HepG2 (cell line): ENCODE measurements at regions of chr3 and their contacts with region 1.

Region 1: GRCh38 chr3:14921078-14921616 is 26.2 kb upstream of the NR2C2 start:
- DNase-seq: peak; percentile 68
- ATAC-seq: peak; percentile 90
- H3K4me3 ChIP-seq: no peak overlapping the region; a peak in 1 of 6 replicates
- H3K27ac ChIP-seq: no peak overlapping the region
- H3K4me1 ChIP-seq: peaks cover 6% of the 10 kb centered on the region; the same call in 1 of the 2 replicates
- H3K27me3 ChIP-seq: peaks cover 0 to 42% of the 10 kb centered on the region in 2 experiments; a peak in 2 of 5 replicates
- CTCF ChIP-seq: peak; percentile 99
- EP300 ChIP-seq: no peak
- POLR2A ChIP-seq: no peak
- RAD21 ChIP-seq: peak; percentile 96

Region 2: GRCh38 chr3:14672588-14672987 is 248.6 kb before region 1 on chr3:
- CTCF ChIA-PET with region 1: interaction called, 24 read pairs
- POLR2A ChIA-PET with region 1: no interaction called
- in situ Hi-C with region 1: loop called (anchors 5 kb)
- intact Hi-C with region 1: loop called (anchors 1 kb)
- DNase-seq: no peak
- ATAC-seq: no peak
- H3K4me3 ChIP-seq: no peak overlapping the region
- H3K27ac ChIP-seq: no peak overlapping the region
- H3K4me1 ChIP-seq: peaks cover 21% of the 10 kb centered on the region
- H3K27me3 ChIP-seq: no peaks in the 10 kb centered on the region
- CTCF ChIP-seq: no peak
- EP300 ChIP-seq: no peak
- POLR2A ChIP-seq: no peak
- RAD21 ChIP-seq: no peak

Region 3: GRCh38 chr3:14791343-14791945 is 129.7 kb before region 1 on chr3:
- CTCF ChIA-PET with region 1: interaction called, 31 read pairs
- POLR2A ChIA-PET with region 1: no interaction called
- in situ Hi-C with region 1: loop called (anchors 5 kb)
- intact Hi-C with region 1: loop called (anchors 1 kb)
- DNase-seq: peak; percentile 46
- ATAC-seq: peak; percentile 88
- H3K4me3 ChIP-seq: no peak overlapping the region
- H3K27ac ChIP-seq: no peak overlapping the region
- H3K4me1 ChIP-seq: peaks cover 14% of the 10 kb centered on the region
- H3K27me3 ChIP-seq: peaks cover 0 to 6% of the 10 kb centered on the region in 2 experiments; a peak in 2 of 5 replicates
- CTCF ChIP-seq: peak; percentile 96
- EP300 ChIP-seq: no peak
- POLR2A ChIP-seq: no peak
- RAD21 ChIP-seq: peak; percentile 85

Region 4: DNA sequence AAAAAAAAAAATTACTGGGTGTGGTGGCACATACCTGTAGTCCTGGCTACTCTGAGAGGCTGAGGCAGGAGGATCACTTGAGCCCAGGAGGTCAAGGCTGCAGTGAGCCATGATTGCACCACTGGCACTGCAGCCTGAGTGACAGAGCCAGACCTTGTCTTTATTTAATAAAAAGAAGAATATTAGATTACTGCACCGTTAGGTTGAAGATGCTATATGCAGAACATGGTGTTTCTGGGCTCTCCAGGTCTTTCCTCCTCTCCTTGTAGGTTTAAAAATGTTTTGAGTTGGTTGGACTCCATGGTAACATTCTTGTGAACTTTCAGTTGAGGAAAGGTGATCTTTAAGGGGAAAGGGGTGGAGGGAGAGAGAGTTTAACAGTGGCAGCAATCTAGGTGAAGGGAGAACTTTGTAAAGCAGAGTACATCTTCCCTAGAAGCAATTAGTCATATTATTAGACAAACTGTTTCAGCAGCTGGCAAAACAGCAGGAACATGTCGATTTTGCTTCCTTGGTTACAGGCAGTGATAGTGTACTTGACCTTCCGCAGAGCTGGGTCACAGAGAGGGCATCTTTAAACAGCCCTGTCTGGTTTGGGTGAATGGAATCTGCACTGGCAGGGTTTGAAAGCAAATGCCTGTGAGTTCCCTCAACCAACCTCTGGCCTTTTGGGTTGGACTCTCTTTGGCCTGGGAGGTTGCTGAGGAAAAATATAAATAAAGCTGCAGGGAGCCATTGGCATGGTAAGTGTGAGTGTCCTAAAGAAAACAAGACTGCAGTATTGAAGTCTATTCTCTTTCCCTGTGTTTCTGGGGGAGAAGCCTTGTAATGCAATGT is 69.0 kb after region 1 on chr3:
- CTCF ChIA-PET with region 1: no interaction called
- POLR2A ChIA-PET with region 1: no interaction called
- in situ Hi-C with region 1: no loop called
- intact Hi-C with region 1: loop called (anchors 5 kb)
- DNase-seq: peak; percentile 21
- ATAC-seq: peak; percentile 79
- H3K4me3 ChIP-seq: no peak overlapping the region
- H3K27ac ChIP-seq: peak overlapping the region; percentile 17
- H3K4me1 ChIP-seq: peaks cover 18% of the 10 kb centered on the region
- H3K27me3 ChIP-seq: no peaks in the 10 kb centered on the region; a peak in 1 of 5 replicates
- CTCF ChIP-seq: no peak
- EP300 ChIP-seq: no peak
- POLR2A ChIP-seq: no peak
- RAD21 ChIP-seq: no peak

Region 5: DNA sequence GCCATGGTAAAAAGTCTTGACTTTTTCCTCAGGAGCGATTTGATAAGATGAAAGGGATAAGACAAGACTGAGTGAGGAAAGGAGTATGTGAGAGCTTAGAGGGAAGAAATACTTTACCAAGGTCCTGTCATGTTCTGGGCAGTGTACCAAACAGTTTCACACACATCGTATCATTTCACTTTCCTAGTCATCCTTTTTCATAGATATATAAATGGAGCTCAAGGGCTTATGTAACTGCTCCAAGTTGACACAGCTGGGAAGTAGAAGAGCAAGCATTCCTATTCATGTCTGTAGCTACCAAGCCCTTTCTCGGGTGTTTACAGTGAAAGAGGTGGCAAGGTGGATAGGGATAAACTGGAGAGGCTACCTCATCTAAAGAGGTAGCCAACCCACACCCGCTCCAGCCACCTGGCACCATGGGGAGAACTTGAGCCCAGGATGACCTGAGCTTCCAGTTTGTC is 86.6 kb after region 1 on chr3:
- CTCF ChIA-PET with region 1: no interaction called
- POLR2A ChIA-PET with region 1: no interaction called
- in situ Hi-C with region 1: no loop called
- intact Hi-C with region 1: no loop called
- DNase-seq: no peak
- ATAC-seq: no peak
- H3K4me3 ChIP-seq: no peak overlapping the region
- H3K27ac ChIP-seq: no peak overlapping the region
- H3K4me1 ChIP-seq: no peaks in the 10 kb centered on the region
- H3K27me3 ChIP-seq: no peaks in the 10 kb centered on the region
- CTCF ChIP-seq: no peak
- EP300 ChIP-seq: no peak
- POLR2A ChIP-seq: no peak
- RAD21 ChIP-seq: no peak